Activated CD4-positive, alpha-beta T cell treated with anti-CD3 and anti-CD28 coated beads, Interleukin-2, amount 10 ng/mL, durations not matched to agents 24 days and 14 days (primary cell): ENCODE measurements at regions of chr7 and their contacts with region 1.

Region 1: GRCh38 chr7:100719523-100720319 is 547 bp upstream of the EPO start:
- DNase-seq: no peak
- H3K4me3 Mint-ChIP-seq: no peak overlapping the region
- H3K27ac Mint-ChIP-seq: no peak overlapping the region
- H3K4me1 Mint-ChIP-seq: no peaks in the 10 kb centered on the region
- H3K27me3 Mint-ChIP-seq: peaks cover 43% of the 10 kb centered on the region

Region 2: DNA sequence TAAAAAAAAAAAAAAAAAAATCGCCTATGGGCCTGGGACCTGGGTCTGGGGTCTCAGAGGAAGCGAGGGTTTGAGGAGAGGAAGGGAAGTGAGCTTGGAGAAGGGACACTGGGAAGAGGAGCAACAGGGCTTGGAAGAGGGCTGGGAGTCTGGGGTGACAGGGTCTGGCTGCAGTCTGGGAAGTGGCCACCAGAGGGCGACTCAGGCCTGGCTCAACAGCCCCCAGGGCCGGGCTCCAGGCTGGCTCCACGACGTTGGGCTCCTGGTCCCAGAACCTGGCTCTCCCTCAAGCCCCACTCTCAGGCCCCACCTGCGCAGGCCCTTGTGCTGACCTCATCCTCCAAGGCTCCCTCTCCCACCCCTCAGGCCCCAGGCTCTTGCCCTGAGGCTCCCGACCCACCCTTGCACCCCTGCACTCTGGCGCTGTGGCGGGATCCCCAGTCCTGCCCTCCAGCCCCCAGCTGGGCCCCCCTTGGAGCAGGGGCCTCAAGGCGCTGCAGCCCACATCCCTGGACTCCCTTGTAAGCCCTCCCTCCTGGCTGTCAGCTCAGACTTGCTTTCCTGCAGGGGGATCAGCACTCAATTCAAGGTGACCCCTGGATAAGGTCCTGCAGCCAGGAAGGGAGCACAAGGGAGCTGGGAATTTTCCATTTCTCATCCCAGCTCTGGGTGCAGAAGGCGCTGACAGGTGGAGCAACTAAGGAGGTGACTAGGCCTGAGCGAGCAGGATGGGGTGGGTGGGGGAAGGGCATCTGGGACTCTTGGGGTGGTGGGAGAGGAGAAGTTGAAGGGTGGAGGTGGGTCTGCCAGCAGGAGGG is 250.3 kb before region 1 on chr7:
- intact Hi-C with region 1: no loop called
- DNase-seq: peak; percentile 94
- H3K4me3 Mint-ChIP-seq: no peak overlapping the region
- H3K27ac Mint-ChIP-seq: no peak overlapping the region
- H3K4me1 Mint-ChIP-seq: peaks cover 25% of the 10 kb centered on the region
- H3K27me3 Mint-ChIP-seq: no peaks in the 10 kb centered on the region

Region 3: GRCh38 chr7:100789055-100789454 is 69.3 kb after region 1 on chr7:
- intact Hi-C with region 1: loop called (anchors 10 kb)
- DNase-seq: no peak
- H3K4me3 Mint-ChIP-seq: no peak overlapping the region
- H3K27ac Mint-ChIP-seq: no peak overlapping the region
- H3K4me1 Mint-ChIP-seq: no peaks in the 10 kb centered on the region
- H3K27me3 Mint-ChIP-seq: peaks cover 7% of the 10 kb centered on the region